GM12878 (cell line): ENCODE measurements at regions of chr6 and their contacts with region 1.

Region 1: DNA sequence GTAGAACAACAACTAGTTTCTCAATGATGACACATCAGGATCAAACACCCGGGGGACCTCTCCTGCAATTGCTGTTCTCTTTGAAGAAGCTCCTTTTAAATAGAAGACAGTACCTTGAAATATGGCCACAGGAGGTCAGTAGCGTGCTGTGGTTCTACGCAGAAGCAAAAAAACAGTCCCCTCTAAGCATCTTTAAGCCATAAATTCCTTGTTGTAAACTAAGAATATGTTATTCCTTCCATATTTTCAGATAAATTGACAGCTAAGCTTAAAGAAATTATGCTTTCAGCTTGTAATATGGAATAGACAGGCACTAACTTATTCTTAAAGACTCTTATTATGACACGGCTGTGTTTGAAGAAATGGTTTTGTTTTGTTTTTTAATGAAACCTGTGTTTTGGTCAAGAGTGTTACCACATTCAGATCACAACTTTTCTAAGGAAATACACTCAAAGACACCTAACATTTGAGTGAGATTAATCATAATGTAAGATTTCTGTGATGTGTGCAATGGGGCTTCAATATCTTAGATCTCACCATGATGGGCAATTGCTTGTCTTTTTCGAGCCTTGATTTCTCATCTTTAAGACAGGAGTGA is 49.7 kb upstream of the IL20RA start:
- DNase-seq: peak; percentile 91
- ATAC-seq: peak; percentile 58
- H3K4me3 ChIP-seq: 0 out of 2 replicates have a peak overlapping the region, but pooled peaks have one; percentile 0
- H3K27ac ChIP-seq: peak overlapping the region; percentile 95
- H3K4me1 ChIP-seq: peaks cover 55% of the 10 kb centered on the region
- H3K27me3 ChIP-seq: no peaks in the 10 kb centered on the region
- CTCF ChIP-seq: peak; percentile 70 to 87 (median 76)
- EP300 ChIP-seq: peak in 1 of 2 experiments; percentile 32; a peak in 1 of 4 replicates
- POLR2A ChIP-seq: no peak
- RAD21 ChIP-seq: peak; percentile 93

Region 2: GRCh38 chr6:137033828-137034227 is 60.7 kb before region 1 on chr6:
- CTCF ChIA-PET with region 1: no interaction called
- POLR2A ChIA-PET with region 1: no interaction called
- RAD21 ChIA-PET with region 1: no interaction called
- SMC1A ChIA-PET with region 1: no interaction called
- in situ Hi-C with region 1: no loop called
- intact Hi-C with region 1: no loop called
- DNase-seq: peak; percentile 76
- ATAC-seq: peak; percentile 99
- H3K4me3 ChIP-seq: no peak overlapping the region
- H3K27ac ChIP-seq: no peak overlapping the region
- H3K4me1 ChIP-seq: no peaks in the 10 kb centered on the region
- H3K27me3 ChIP-seq: no peaks in the 10 kb centered on the region; a peak in 1 of 4 replicates
- CTCF ChIP-seq: no peak
- EP300 ChIP-seq: peak; percentile 83; a peak in 3 of 4 replicates
- POLR2A ChIP-seq: no peak
- RAD21 ChIP-seq: no peak

Region 3: GRCh38 chr6:137076277-137077068 is 18.0 kb before region 1 on chr6:
- CTCF ChIA-PET with region 1: interaction called, 164 read pairs
- POLR2A ChIA-PET with region 1: interaction called, 8 read pairs
- RAD21 ChIA-PET with region 1: interaction called, 80 read pairs
- SMC1A ChIA-PET with region 1: interaction called, 110 read pairs
- in situ Hi-C with region 1: no loop called
- intact Hi-C with region 1: loop called (anchors 1 kb)
- DNase-seq: no peak
- ATAC-seq: peak; percentile 100
- H3K4me3 ChIP-seq: no peak overlapping the region
- H3K27ac ChIP-seq: peak overlapping the region; percentile 42
- H3K4me1 ChIP-seq: peaks cover 7% of the 10 kb centered on the region
- H3K27me3 ChIP-seq: no peaks in the 10 kb centered on the region
- CTCF ChIP-seq: peak; percentile 90 to 96 (median 93); a peak in 5 of 6 replicates
- EP300 ChIP-seq: no peak
- POLR2A ChIP-seq: no peak
- RAD21 ChIP-seq: peak; percentile 96

Region 4: DNA sequence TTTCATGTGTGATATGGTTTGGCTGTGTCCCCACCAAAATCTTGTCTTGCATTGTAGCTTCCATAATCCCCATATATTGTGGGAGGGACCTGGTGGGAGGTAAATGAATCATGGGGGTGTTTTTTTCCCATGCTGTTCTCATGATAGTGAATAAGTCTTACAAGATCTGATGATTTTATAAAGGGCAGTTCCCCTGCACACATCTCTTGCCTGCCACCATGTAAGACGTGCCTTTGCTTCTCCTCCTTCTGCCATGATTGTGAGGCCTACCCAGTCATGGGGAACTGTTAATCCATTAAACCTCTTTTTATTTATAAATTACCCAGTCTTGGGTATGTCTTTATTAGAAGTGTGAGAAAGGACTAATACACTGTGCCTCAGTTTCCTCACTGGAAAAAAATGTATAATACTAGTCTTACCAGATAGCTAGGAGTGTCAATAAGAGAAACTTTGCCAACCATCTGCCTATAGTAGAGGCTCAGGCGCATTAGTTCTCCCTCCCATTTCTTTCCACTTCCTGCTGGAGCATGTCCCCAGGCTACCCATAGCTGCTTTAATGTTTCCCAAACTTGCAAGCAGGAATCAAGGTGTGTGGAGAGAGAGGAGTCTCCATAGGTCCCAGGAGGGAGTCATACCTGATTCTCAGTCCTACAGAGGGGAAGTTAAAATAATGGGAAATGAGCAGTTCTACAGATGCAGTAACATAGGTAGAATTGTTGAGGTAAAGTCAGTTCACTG is 83.3 kb after region 1 on chr6:
- CTCF ChIA-PET with region 1: interaction called, 13 read pairs
- POLR2A ChIA-PET with region 1: interaction called, 11 read pairs
- RAD21 ChIA-PET with region 1: interaction called, 500 read pairs
- SMC1A ChIA-PET with region 1: interaction called, 293 read pairs
- in situ Hi-C with region 1: no loop called
- intact Hi-C with region 1: no loop called
- DNase-seq: no peak
- ATAC-seq: no peak
- H3K4me3 ChIP-seq: no peak overlapping the region
- H3K27ac ChIP-seq: no peak overlapping the region
- H3K4me1 ChIP-seq: peaks cover 19% of the 10 kb centered on the region
- H3K27me3 ChIP-seq: no peaks in the 10 kb centered on the region
- CTCF ChIP-seq: no peak
- EP300 ChIP-seq: no peak
- POLR2A ChIP-seq: no peak
- RAD21 ChIP-seq: no peak

Region 5: GRCh38 chr6:137233911-137234863 is 139.7 kb after region 1 on chr6:
- CTCF ChIA-PET with region 1: interaction called, 9 read pairs
- POLR2A ChIA-PET with region 1: interaction called, 8 read pairs
- RAD21 ChIA-PET with region 1: interaction called, 68 read pairs
- SMC1A ChIA-PET with region 1: interaction called, 17 read pairs
- in situ Hi-C with region 1: no loop called
- intact Hi-C with region 1: no loop called
- DNase-seq: no peak
- ATAC-seq: peak; percentile 79
- H3K4me3 ChIP-seq: peak overlapping the region; percentile 28; the same call in 1 of the 2 replicates
- H3K27ac ChIP-seq: peak overlapping the region; percentile 76
- H3K4me1 ChIP-seq: peaks cover 52% of the 10 kb centered on the region
- H3K27me3 ChIP-seq: no peaks in the 10 kb centered on the region
- CTCF ChIP-seq: no peak
- EP300 ChIP-seq: peak in 1 of 2 experiments; percentile 60; a peak in 1 of 4 replicates
- POLR2A ChIP-seq: no peak
- RAD21 ChIP-seq: no peak

Region 6: GRCh38 chr6:137283940-137284810 is 189.7 kb after region 1 on chr6:
- CTCF ChIA-PET with region 1: interaction called, 4 read pairs
- POLR2A ChIA-PET with region 1: no interaction called
- RAD21 ChIA-PET with region 1: interaction called, 5 read pairs
- SMC1A ChIA-PET with region 1: interaction called, 15 read pairs
- in situ Hi-C with region 1: no loop called
- intact Hi-C with region 1: no loop called
- DNase-seq: peak; percentile 79
- ATAC-seq: peak; percentile 88
- H3K4me3 ChIP-seq: peak overlapping the region; percentile 45; the same call in 1 of the 2 replicates
- H3K27ac ChIP-seq: peak overlapping the region; percentile 76
- H3K4me1 ChIP-seq: peaks cover 25% of the 10 kb centered on the region
- H3K27me3 ChIP-seq: no peaks in the 10 kb centered on the region
- CTCF ChIP-seq: no peak
- EP300 ChIP-seq: peak; percentile 33 to 35; a peak in 2 of 4 replicates
- POLR2A ChIP-seq: no peak
- RAD21 ChIP-seq: no peak

Region 7: GRCh38 chr6:137589067-137589848 is 494.7 kb after region 1 on chr6:
- CTCF ChIA-PET with region 1: interaction called, 14 read pairs
- POLR2A ChIA-PET with region 1: no interaction called
- RAD21 ChIA-PET with region 1: no interaction called
- SMC1A ChIA-PET with region 1: no interaction called
- in situ Hi-C with region 1: no loop called
- intact Hi-C with region 1: loop called (anchors 1 kb)
- DNase-seq: peak; percentile 74
- ATAC-seq: peak; percentile 100
- H3K4me3 ChIP-seq: 0 out of 2 replicates have a peak overlapping the region, but pooled peaks have one; percentile 19
- H3K27ac ChIP-seq: no peak overlapping the region
- H3K4me1 ChIP-seq: peaks cover 2% of the 10 kb centered on the region; the same call in 1 of the 2 replicates
- H3K27me3 ChIP-seq: no peaks in the 10 kb centered on the region
- CTCF ChIP-seq: peak; percentile 62 to 98 (median 81)
- EP300 ChIP-seq: no peak
- POLR2A ChIP-seq: no peak
- RAD21 ChIP-seq: peak; percentile 72